Caco-2 (cell line): ENCODE measurements at regions of chr4 and their contacts with region 1.

Region 1: DNA sequence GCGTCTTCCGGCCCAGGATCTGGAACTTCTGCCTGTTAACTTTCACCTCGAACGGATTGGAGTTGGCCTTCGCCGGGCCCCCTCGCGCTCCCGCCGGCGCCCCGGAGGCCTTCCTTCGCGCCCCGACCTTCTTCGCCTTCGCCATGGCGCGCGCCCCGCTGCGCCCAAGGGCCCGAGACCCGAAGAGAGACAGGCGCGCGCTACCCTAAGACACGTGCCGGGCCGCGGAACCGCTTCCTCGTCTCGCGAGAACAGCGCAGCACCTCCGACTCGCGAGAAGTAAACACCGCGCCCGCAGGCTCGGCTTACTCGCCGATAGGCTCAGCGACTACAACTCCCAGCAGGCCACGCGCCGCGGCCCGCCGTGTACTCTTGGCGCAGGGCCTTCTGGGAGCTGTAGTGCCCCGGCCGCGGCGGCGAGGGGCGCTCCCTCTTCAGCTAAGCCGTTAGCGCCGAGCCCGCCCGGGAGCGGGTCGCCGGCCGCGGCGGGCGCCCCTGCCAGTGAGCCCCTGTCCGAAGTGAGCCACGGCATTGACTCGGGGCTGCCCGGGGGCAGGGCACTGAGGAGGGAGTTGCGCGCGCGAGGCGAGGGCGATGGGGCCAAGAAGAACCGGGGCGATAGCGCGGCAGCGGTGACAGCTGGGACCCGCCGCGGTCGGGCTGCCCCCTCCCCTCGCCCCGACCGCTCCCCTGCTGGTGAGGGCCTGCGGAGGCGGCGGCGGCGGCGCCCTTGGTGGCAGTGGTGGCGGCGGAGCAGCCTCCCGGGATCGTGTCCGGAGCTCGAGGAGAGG is at the starts of genes GRK4 and NOP14:
- DNase-seq: peak; percentile 97 to 98
- H3K4me3 ChIP-seq: peak within 1 kb of the TSS; percentile 96
- H3K4me3 Mint-ChIP-seq: peak within 1 kb of the TSS; percentile 73
- H3K27ac Mint-ChIP-seq: peak within 1 kb of the TSS; percentile 88
- H3K4me1 ChIP-seq: peaks cover 7% of the 10 kb centered on the region
- H3K4me1 Mint-ChIP-seq: peaks cover 7% of the 10 kb centered on the region
- H3K27me3 ChIP-seq: no peaks in the 10 kb centered on the region
- H3K27me3 Mint-ChIP-seq: no peaks in the 10 kb centered on the region
- CTCF ChIP-seq: peak; percentile 20 to 29
- total RNA-seq, gene GRK4: 6.8 and 7.1 TPM in 2 replicates
- total RNA-seq, gene NOP14: 55.2 and 60.5 TPM in 2 replicates

Region 2: DNA sequence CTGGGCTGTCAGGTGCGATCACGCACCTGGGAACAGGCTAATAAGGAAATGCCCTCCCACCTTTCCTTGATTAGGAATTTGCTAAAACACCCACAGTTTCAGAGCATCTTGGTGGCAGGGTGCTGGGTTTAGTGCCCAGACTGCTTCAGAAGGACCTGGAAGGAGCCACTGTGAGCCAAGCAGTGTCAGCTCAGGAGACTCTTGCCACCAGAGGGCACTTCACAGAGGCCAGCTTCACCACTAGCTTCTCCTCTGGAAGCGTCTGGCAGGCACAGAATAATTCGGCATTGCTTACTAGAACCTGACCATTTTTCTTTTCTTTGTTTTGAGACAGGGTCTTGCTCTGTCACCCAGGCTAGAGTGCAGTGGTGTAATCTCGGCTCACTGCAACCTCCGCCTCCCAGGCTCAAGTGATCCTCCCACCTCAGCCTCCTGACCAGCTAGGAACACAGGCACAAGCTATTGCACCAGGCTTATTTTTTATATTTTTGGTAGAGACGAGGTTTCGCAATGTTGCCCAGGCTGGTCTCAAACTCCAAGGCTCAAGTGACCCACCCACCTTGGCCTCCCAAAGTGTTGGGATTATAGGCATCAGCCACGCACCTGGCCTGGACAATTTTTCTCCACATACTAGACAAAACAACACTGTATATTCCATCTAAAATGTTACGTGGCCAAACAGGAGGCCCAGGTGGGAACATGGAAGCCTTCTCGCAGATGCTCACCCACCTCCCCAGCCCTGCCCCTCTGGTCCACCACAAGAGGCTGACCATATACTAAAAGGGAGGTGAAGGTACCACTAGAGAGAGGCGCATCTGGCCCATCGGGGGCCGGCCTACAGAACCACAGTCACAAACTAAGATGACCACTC is 14.2 kb before region 1 on chr4:
- CTCF ChIA-PET with region 1: interaction called, 13 read pairs
- POLR2A ChIA-PET with region 1: interaction called, 10 read pairs
- intact Hi-C with region 1: no loop called
- DNase-seq: peak in 1 of 2 experiments; percentile 54
- H3K4me3 ChIP-seq: no peak overlapping the region
- H3K4me3 Mint-ChIP-seq: no peak overlapping the region
- H3K27ac Mint-ChIP-seq: peak overlapping the region; percentile 45
- H3K4me1 ChIP-seq: peaks cover 5% of the 10 kb centered on the region; the same call in 1 of the 2 replicates
- H3K4me1 Mint-ChIP-seq: peaks cover 6% of the 10 kb centered on the region
- H3K27me3 ChIP-seq: no peaks in the 10 kb centered on the region
- H3K27me3 Mint-ChIP-seq: no peaks in the 10 kb centered on the region
- CTCF ChIP-seq: peak; percentile 49 to 51

Region 3: GRCh38 chr4:3013839-3014350 is 50.5 kb after region 1 on chr4:
- CTCF ChIA-PET with region 1: interaction called, 14 read pairs
- POLR2A ChIA-PET with region 1: no interaction called
- intact Hi-C with region 1: no loop called
- DNase-seq: peak; percentile 73 to 80
- H3K4me3 ChIP-seq: no peak overlapping the region
- H3K4me3 Mint-ChIP-seq: peak overlapping the region; percentile 38
- H3K27ac Mint-ChIP-seq: no peak overlapping the region
- H3K4me1 ChIP-seq: peaks cover 7% of the 10 kb centered on the region; the same call in 1 of the 2 replicates
- H3K4me1 Mint-ChIP-seq: peaks cover 9% of the 10 kb centered on the region
- H3K27me3 ChIP-seq: no peaks in the 10 kb centered on the region
- H3K27me3 Mint-ChIP-seq: no peaks in the 10 kb centered on the region
- CTCF ChIP-seq: no peak

Region 4: DNA sequence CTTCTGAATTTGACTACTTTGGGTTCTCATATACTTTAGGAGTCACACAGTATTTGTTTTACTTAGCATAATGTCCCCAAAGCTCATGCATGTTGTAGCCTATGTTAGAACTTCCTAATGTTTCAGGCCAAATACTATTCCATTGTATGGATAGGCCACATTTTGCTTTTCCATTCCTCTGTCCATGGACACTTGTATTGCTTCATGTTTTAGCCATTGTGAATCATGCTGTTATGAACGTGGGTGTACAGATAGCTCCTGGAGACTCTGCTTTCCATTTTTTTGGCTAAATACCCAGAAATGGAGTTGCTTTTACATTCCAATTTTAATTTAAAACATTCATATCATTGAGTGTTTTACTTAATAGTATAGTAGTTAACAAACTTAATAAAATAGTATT is 165.6 kb after region 1 on chr4:
- CTCF ChIA-PET with region 1: no interaction called
- POLR2A ChIA-PET with region 1: no interaction called
- intact Hi-C with region 1: no loop called
- DNase-seq: no peak
- H3K4me3 ChIP-seq: no peak overlapping the region
- H3K4me3 Mint-ChIP-seq: no peak overlapping the region
- H3K27ac Mint-ChIP-seq: no peak overlapping the region
- H3K4me1 ChIP-seq: no peaks in the 10 kb centered on the region
- H3K4me1 Mint-ChIP-seq: no peaks in the 10 kb centered on the region
- H3K27me3 ChIP-seq: no peaks in the 10 kb centered on the region
- H3K27me3 Mint-ChIP-seq: no peaks in the 10 kb centered on the region
- CTCF ChIP-seq: no peak